GM10248 (cell line): ENCODE measurements at regions of chr19 and their contacts with region 1.

Region 1: DNA sequence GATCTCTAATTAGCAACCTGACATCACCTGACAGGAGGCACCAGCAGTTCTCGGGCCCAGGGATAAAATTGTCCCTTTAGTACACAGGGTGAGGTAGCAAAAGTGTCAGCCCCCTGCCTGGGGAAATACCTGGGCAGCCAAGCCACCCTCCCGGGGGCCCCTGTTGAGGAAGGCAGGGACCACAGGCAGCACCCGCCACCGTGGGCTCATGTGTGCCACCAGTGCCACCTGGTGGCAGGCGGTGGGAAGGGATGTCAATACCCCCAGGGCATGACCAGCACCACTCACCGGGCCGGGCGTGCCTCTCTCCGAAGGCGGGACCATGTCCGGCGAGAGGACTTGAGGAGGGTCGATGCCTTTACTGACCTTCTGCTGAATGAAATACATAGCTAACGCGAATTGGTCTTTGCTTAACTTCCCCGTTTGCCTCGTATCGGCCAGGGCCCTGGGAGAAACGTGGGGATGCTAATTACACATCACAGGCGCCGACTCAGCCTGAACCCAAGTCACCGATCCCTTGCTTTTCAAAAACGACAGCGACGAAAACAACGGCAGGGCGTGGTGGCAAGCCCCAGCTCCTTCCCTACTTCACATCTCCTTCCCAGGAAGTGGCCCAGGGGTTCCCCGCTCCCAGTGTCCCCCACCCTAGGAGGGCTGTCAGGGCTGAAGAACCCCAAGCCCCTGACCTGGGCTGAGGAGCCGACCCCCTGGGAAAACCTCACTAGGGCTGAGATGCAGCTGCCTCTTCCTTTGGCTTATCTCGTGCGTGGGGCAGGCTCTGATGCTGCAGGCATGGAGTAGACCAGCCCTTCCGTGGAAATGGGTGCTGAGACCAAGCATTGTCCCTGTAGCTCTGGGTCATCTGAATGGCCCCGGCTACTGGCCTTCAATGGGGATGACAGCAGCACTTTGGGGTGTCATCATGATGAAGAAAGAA is 53.8 kb downstream of the EPS15L1 start:
- DNase-seq: peak; percentile 89
- CTCF ChIP-seq: peak; percentile 88

Region 2: DNA sequence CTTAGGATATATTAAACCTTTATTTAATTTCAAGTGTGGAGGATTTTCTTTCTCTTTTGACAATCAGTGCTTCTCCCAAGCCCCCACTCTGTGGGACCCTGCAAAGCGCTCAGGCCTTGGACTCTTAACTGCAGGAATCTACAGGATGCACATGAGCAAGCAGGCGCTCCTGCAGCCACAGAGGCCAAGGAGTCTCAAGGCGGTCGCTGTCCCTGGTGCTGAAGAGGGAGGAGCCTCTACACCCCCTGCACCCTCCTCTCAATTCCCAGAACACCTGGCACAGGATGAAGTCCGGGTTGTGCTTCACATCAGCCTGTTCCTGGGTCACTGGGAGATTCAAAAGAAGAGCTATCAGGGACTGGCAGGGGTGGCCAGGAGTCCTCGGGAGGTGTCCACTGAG is 455.6 kb before region 1 on chr19:
- CTCF ChIA-PET with region 1: no interaction called
- POLR2A ChIA-PET with region 1: interaction called, 11 read pairs
- DNase-seq: no peak
- CTCF ChIP-seq: no peak

Region 3: DNA sequence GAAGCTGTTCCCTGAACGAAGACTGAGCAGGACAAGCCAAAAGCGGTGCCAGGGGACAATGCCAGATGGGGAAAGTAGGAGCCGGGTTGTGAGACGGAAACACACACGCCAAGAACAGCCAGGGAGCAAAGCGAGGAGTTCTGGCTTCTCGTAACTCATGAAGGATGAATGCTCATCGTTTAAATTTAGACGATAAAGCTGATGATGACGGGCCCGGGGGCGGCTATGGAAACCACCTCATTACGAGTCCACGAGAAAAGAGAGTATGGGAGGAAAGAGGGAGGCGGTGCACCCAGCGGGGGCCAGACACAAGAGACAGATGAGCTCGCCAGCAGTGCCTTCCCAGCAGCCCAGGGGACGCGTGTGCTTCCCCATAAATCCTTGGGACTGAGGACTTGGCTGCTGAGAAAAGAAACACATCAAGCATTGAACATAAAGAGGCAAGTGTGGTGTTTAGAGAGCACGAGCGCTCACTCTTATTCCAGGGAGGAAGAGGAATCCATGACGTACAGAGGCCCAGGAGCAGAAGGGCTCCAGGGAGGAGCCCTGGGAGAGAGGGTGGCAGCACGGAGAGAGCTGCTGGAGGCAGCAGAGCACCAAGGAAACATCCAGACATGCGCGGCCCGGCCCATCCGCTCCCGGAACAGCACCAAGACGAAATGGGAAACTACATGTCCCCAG is 16.9 kb before region 1 on chr19:
- CTCF ChIA-PET with region 1: interaction called, 16 read pairs
- POLR2A ChIA-PET with region 1: no interaction called
- DNase-seq: no peak
- CTCF ChIP-seq: no peak